Heart left ventricle (tissue), 16 donors: ENCODE measurements at regions of chr12 and their contacts with region 1.

Region 1: DNA sequence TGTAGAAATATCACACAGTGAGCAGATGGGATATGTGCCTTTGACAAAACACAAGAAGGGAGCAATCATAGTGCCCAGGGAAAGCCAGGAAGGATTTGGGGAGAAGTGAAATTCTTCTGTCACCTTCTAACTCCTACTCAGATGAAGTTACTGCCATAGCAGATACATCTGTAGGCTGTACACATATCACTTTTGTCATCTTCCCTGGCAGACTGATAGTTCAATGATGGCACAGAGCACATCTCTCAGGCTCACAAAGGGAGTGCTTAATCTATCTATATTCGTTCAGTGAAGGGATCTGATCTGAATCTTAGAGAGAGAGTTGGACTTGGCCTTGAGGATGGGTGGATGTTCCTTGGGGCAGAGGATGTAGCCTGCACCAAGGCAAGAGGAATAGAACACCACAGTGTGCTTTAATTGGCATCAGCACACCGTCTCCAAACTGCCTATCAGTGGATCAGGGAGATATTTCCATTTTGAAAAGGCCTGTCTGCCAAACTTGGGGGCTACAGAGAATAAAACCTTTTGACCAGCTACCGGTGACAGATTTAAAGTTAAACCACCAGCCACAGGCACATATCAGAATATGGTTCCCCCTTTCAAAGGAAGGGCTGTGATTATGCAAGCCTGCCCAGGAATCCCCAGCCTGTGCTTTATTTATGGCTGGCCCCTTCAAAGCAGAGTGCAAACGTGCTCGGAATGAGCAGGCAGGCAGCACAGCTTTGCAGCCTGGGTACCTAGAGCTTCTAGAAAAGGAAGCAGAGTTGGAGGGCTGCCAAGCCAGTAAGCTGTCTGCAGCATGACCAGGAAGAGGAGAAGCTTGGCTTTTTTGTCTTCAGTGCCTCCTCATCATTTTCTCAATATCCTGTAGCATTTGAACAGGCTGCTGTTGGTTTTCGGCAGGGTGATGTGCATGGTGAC is 165.5 kb upstream of the DYRK2 start:
- DNase-seq: peak; percentile 79 to 91 (median 83)
- ATAC-seq: peak; percentile 90 to 95 (median 92)
- H3K4me3 ChIP-seq: no peak overlapping the region
- H3K27ac ChIP-seq: peak overlapping the region in 4 of 12 donors; percentile 12 to 61 (median 28)
- H3K4me1 ChIP-seq: peaks cover 0 to 21% (median 10%) of the 10 kb centered on the region in 12 donors
- H3K27me3 ChIP-seq: no peaks in the 10 kb centered on the region
- CTCF ChIP-seq: no peak
- POLR2A ChIP-seq: no peak

Region 2: GRCh38 chr12:67578976-67579661 is 96.1 kb after region 1 on chr12:
- intact Hi-C with region 1: loop called in 1 of 10 experiments (anchors 10 kb)
- DNase-seq: no peak
- ATAC-seq: no peak
- H3K4me3 ChIP-seq: no peak overlapping the region
- H3K27ac ChIP-seq: peak overlapping the region in 1 of 12 donors; percentile 56
- H3K4me1 ChIP-seq: peaks cover 0 to 6% (median 0%) of the 10 kb centered on the region in 12 donors
- H3K27me3 ChIP-seq: no peaks in the 10 kb centered on the region
- CTCF ChIP-seq: no peak
- POLR2A ChIP-seq: no peak

Region 3: GRCh38 chr12:68420225-68421010 is 937.4 kb after region 1 on chr12:
- intact Hi-C with region 1: no loop called
- DNase-seq: no peak
- ATAC-seq: peak in 3 of 4 donors; percentile 51 to 70 (median 63)
- H3K4me3 ChIP-seq: no peak overlapping the region
- H3K27ac ChIP-seq: peak overlapping the region in 5 of 12 donors; percentile 4 to 78 (median 24)
- H3K4me1 ChIP-seq: peaks cover 0 to 28% (median 8%) of the 10 kb centered on the region in 12 donors
- H3K27me3 ChIP-seq: no peaks in the 10 kb centered on the region
- CTCF ChIP-seq: no peak
- POLR2A ChIP-seq: no peak